ENCODE measurements at regions of chr7 and their contacts with region 1.

Region 1: GRCh38 chr7:30564243-30564892 is 30.3 kb upstream of the GARS1 start:
- DNase-seq: peak; percentile 36
- H3K4me3 ChIP-seq: no peak overlapping the region
- CTCF ChIP-seq: peak; percentile 88

Region 2: DNA sequence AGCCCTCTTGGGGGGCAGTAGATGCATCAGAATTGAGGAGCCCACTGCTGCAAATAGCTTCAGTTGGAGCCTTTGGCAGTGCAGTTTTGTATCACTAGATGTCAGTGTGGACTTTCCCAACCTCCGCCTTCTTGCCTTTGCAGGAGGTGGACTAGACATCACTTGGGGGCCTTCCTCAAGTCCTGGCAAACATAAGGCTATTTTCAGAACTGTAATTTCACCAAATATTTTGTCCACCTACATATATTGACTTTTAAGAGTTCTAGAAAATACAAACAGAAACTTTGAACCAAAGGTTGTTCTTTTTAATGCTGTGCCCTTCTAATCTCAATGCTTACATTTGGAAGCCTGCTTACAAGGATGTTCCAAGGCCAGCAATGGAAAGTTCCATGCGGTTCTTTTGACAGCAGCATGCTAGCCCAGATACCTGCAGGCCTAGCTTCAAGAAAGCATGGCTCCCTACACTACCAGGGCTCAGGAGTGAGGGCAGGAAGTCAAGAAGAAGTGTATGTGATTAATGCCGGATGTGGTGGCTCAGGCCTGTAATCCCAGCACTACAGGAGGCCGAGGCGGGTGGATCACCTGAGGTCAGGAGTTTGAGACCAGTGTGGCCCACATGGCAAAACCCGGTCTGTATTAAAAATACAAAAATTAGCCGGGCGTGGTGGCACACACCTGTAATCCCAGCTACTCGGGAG is 288.0 kb before region 1 on chr7:
- CTCF ChIA-PET with region 1: interaction called, 81 read pairs
- POLR2A ChIA-PET with region 1: no interaction called
- DNase-seq: peak; percentile 24
- H3K4me3 ChIP-seq: no peak overlapping the region
- CTCF ChIP-seq: peak; percentile 76

Region 3: DNA sequence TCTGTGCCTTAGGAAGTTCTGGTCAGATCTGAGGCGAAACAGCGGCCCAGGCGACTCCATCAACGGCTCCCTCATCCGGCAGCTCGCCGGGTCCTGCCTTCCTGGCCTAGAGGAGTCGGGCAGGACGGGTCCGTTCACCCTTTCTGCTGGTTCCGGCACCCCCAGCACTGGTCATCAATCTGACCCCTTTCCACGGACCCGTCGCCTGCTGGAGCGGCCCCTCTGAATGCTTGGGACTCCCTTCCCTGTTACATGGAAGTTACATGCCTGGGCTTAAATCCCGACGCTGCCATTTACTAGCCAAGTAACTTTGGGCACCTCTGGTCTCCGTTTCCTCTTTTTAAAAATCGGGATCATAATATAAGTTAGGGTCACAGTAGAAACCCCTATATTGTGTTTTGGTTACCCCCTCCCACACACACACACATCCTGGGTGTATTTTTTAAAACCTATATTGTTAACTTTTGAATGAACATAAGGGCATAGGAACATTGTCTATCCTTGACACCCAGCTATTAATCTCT is 59.1 kb before region 1 on chr7:
- CTCF ChIA-PET with region 1: interaction called, 132 read pairs
- POLR2A ChIA-PET with region 1: no interaction called
- DNase-seq: no peak
- H3K4me3 ChIP-seq: peak overlapping the region; percentile 65
- CTCF ChIP-seq: no peak

Region 4: GRCh38 chr7:30521532-30521931 is 42.8 kb before region 1 on chr7:
- CTCF ChIA-PET with region 1: interaction called, 33 read pairs
- POLR2A ChIA-PET with region 1: no interaction called
- DNase-seq: peak; percentile 17
- H3K4me3 ChIP-seq: no peak overlapping the region
- CTCF ChIP-seq: no peak

Region 5: DNA sequence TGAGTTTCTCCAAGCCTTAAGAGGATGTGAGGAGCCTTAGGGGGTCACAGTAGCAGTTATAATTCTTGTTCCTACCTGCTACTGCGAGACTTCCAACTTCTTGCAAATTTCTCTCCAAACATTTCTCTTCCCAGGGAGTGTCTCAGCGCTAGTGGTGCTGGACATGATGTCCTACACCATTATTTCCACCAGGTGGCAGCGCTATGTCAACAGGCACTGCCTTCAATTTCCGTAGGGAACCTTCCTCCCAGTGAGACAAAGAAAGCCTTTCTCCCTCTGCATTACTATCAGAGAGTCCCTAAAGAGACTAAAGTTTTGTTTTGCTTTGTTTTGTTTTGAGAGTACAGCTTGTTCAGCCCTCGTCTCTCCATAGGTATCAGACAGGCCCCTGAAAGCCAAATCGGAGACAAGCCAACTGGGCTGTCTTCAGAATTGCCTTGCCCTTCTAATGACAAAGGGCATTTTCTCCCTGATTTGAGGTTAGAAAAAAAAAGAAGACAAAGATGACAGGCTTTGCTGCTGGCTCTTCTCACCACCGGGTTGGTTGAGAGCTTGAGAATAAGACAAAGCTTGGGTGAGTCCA is 15.5 kb before region 1 on chr7:
- CTCF ChIA-PET with region 1: interaction called, 324 read pairs
- POLR2A ChIA-PET with region 1: no interaction called
- DNase-seq: no peak
- H3K4me3 ChIP-seq: no peak overlapping the region
- CTCF ChIP-seq: peak; percentile 74

Region 6: GRCh38 chr7:30625283-30625682 is 60.9 kb after region 1 on chr7:
- CTCF ChIA-PET with region 1: no interaction called
- POLR2A ChIA-PET with region 1: no interaction called
- DNase-seq: no peak
- H3K4me3 ChIP-seq: no peak overlapping the region
- CTCF ChIP-seq: no peak

Region 7: GRCh38 chr7:30702200-30702599 is 137.8 kb after region 1 on chr7:
- CTCF ChIA-PET with region 1: no interaction called
- POLR2A ChIA-PET with region 1: no interaction called
- DNase-seq: no peak
- H3K4me3 ChIP-seq: no peak overlapping the region
- CTCF ChIP-seq: no peak

Region 8: GRCh38 chr7:30845426-30846135 is 281.2 kb after region 1 on chr7:
- CTCF ChIA-PET with region 1: no interaction called
- POLR2A ChIA-PET with region 1: no interaction called
- DNase-seq: no peak
- H3K4me3 ChIP-seq: no peak overlapping the region
- CTCF ChIP-seq: no peak